PC-9 (cell line): ENCODE measurements at regions of chr22 and their contacts with region 1.

Region 1: GRCh38 chr22:36129486-36130388 is 30.8 kb downstream of the APOL3 start:
- DNase-seq: no peak
- H3K4me3 ChIP-seq: no peak overlapping the region
- H3K27ac ChIP-seq: no peak overlapping the region
- H3K4me1 ChIP-seq: no peaks in the 10 kb centered on the region
- H3K27me3 ChIP-seq: peaks cover 52% of the 10 kb centered on the region
- CTCF ChIP-seq: no peak

Region 2: DNA sequence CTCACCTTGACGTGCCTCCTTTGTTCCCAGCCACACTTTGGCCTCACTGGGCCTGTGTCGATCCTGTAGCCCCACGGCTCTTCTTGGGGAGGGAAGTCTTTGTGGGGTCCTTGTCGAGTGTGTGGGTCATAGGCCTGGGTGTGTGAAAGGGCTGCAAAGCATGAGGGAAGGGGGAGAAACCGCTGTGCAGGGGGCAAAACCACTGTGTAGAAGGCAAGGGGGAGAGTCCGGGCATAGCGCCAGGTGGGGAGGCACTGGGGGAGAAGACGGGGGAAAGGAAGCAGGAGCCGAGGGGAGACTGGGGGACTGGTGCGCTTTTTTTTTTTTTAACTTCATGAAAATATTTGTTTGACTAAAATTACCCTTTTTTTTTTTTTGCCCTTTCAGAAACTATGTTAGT is 654.2 kb before region 1 on chr22:
- CTCF ChIA-PET with region 1: interaction called, 16 read pairs
- POLR2A ChIA-PET with region 1: no interaction called
- intact Hi-C with region 1: no loop called
- DNase-seq: no peak
- H3K4me3 ChIP-seq: no peak overlapping the region
- H3K27ac ChIP-seq: no peak overlapping the region
- H3K4me1 ChIP-seq: peaks cover 33% of the 10 kb centered on the region
- H3K27me3 ChIP-seq: no peaks in the 10 kb centered on the region
- CTCF ChIP-seq: no peak

Region 3: DNA sequence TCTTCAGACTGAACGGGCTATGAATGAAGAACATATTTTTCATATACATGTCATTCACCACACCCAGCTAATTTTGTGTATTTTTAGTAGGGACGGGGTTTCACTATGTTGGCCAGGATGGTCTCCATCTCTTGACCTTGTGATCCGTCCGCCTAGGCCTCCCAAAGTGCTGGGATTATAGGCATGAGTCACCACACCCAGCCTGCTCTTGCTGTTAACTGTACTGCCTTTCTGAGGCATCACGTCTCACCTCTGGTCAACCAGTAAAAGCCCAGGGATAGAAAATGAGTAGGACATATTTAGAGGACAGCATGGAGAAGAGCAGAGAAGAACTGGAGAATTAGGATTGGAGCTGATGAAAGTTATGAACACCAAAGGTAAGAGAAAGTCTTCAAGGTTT is 24.7 kb before region 1 on chr22:
- CTCF ChIA-PET with region 1: no interaction called
- POLR2A ChIA-PET with region 1: no interaction called
- intact Hi-C with region 1: no loop called
- DNase-seq: no peak
- H3K4me3 ChIP-seq: no peak overlapping the region
- H3K27ac ChIP-seq: no peak overlapping the region
- H3K4me1 ChIP-seq: no peaks in the 10 kb centered on the region
- H3K27me3 ChIP-seq: no peaks in the 10 kb centered on the region
- CTCF ChIP-seq: no peak

Region 4: DNA sequence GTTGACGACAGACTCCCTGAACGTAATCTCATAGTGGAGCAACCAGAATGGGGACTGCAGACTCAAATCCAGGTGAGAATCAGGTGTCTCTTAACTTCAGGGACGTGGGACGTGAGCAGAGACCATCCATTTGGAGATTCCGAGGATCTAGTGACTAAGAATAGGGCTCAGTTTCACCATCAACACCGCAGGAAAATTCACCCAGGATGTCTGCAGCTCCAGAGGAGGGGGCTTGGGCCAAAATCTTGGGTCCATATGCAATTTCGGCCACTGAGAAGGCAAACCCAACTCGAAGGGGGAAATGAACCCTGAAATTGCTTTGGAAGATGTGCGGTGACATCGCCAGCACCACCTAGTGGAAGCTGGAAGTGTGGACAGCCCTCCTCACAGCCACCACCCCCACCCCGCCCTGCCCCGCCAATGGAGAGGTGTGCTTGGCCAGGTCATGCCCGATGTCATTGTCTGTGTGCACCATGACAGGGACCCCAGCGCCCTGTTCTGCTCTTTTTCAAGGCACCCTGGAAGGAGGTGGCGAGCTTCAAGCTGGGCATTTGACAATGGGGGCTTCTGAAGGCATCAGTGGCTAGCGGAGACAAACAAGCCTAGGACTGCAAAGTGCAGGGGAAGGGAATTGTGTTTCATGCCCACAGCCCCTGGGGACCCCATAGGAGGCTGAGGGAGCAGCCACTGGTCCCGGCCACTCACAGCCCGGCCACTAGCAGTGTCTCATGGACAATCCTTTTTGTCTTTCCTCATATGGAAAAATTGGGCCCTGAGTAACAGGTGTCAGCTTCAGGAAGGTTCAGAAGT is 147.9 kb after region 1 on chr22:
- CTCF ChIA-PET with region 1: no interaction called
- POLR2A ChIA-PET with region 1: no interaction called
- intact Hi-C with region 1: no loop called
- DNase-seq: peak; percentile 59 to 62
- H3K4me3 ChIP-seq: no peak overlapping the region
- H3K27ac ChIP-seq: no peak overlapping the region
- H3K4me1 ChIP-seq: no peaks in the 10 kb centered on the region
- H3K27me3 ChIP-seq: no peaks in the 10 kb centered on the region
- CTCF ChIP-seq: peak; percentile 91